ENCODE measurements at regions of chr6 and their contacts with region 1.

Region 1: DNA sequence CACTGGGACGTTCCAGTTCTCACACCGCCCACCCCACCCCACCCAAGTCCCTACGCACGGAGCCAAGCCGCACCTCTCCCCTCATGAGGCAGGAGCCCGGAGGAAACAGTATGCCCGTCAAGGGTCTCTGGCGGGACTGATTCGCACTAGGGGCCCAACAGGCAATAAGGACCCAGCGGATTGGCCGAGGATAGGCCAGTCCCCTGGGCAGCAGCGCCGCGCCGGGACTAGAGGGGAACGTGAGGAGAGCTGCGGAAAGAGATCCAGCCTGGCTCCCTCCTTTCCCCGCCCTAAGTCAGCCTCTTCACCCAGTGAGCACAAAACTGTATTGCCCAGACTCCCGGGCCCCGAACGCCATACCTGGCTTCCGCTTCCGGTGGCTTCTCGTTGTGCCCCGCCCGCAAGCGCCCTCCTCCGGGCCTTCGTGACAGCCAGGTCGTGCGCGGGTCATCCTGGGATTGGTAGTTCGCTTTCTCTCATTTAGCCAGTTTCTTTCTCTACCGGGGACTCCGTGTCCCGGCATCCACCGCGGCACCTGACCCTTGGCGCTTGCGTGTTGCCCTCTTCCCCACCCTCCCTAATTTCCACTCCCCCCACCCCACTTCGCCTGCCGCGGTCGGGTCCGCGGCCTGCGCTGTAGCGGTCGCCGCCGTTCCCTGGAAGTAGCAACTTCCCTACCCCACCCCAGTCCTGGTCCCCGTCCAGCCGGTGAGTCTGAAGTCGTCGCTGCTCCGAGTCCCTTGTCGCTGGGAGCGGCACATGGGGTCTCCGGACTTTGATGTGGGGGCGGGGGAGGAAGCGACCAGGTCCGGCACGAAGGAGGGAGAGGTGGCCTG is at the start of gene CSNK2B:
- DNase-seq: peak; percentile 95 to 99
- ATAC-seq: peak; percentile 88 to 97 (median 91)
- H3K4me3 ChIP-seq: peak within 1 kb of the TSS; percentile 67
- H3K4me3 Mint-ChIP-seq: peak within 1 kb of the TSS; percentile 96
- H3K27ac ChIP-seq: peak within 1 kb of the TSS; percentile 92
- H3K27ac Mint-ChIP-seq: peak within 1 kb of the TSS; percentile 97 to 100
- H3K4me1 ChIP-seq: peaks cover 43% of the 10 kb centered on the region
- H3K4me1 Mint-ChIP-seq: peaks cover 32 to 53% of the 10 kb centered on the region in 2 donors
- H3K27me3 ChIP-seq: no peaks in the 10 kb centered on the region
- H3K27me3 Mint-ChIP-seq: no peaks in the 10 kb centered on the region
- CTCF ChIP-seq: no peak
- total RNA-seq, gene CSNK2B: 140 to 157 (median 141) TPM

Region 2: GRCh38 chr6:31541658-31542521 is 123.8 kb before region 1 on chr6 and contains the start of gene DDX39B:
- intact Hi-C with region 1: loop called (anchors 5 kb)
- DNase-seq: peak; percentile 85 to 99
- ATAC-seq: peak; percentile 69 to 86 (median 77)
- H3K4me3 ChIP-seq: peak within 1 kb of the TSS; percentile 77
- H3K4me3 Mint-ChIP-seq: peak within 1 kb of the TSS; percentile 99
- H3K27ac ChIP-seq: peak within 1 kb of the TSS; percentile 92
- H3K27ac Mint-ChIP-seq: peak within 1 kb of the TSS; percentile 94 to 96
- H3K4me1 ChIP-seq: peaks cover 36% of the 10 kb centered on the region
- H3K4me1 Mint-ChIP-seq: peaks cover 49 to 56% of the 10 kb centered on the region in 2 donors
- H3K27me3 ChIP-seq: no peaks in the 10 kb centered on the region
- H3K27me3 Mint-ChIP-seq: no peaks in the 10 kb centered on the region
- CTCF ChIP-seq: no peak
- total RNA-seq, gene DDX39B: 506 to 571 (median 534) TPM

Region 3: GRCh38 chr6:31619805-31620585 is 45.7 kb before region 1 on chr6:
- intact Hi-C with region 1: loop called (anchors 1 kb)
- DNase-seq: peak; percentile 93 to 99
- ATAC-seq: peak; percentile 80 to 94 (median 84)
- H3K4me3 ChIP-seq: peak overlapping the region; percentile 91
- H3K4me3 Mint-ChIP-seq: peak overlapping the region; percentile 92
- H3K27ac ChIP-seq: peak overlapping the region; percentile 98
- H3K27ac Mint-ChIP-seq: peak overlapping the region; percentile 92 to 95
- H3K4me1 ChIP-seq: peaks cover 29% of the 10 kb centered on the region
- H3K4me1 Mint-ChIP-seq: peaks cover 20 to 25% of the 10 kb centered on the region in 2 donors
- H3K27me3 ChIP-seq: no peaks in the 10 kb centered on the region
- H3K27me3 Mint-ChIP-seq: no peaks in the 10 kb centered on the region
- CTCF ChIP-seq: no peak

Region 4: DNA sequence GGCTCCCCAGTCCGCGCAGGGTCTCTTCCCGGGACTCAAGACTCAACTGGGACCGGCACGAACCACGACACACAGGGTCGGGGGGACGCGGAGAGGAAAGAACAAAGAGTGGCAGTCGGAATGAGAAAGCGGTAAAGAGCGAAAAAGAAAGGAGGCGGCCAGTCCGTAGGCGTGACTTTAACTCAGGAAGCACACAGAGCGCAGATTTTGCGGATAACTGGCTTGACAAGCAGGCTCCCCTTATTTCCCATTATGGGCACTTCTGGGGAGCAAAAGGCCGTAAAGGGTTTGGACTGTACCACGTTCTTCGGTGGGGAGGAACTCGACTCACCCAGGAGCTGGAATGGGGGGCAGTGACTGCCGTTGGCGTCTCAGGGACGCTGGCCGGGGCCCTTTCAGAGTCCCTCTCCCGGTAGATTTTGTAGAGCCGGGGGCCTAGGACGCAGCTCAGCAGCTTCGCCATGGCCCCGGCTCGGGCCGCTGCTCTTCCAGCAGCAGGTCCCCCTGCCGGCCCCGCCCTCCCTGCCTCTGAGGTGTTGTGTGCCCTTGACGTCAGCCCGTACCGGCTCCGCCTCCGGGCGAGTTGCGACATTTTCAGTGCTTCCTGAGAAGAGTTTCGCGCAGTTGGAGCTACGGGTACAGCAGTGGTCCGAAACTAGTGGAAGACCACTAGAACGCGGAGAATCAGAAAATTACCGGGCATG is 37.3 kb after region 1 on chr6 and contains the start of gene ABHD16A:
- intact Hi-C with region 1: loop called (anchors 2 kb)
- DNase-seq: peak; percentile 97 to 99
- ATAC-seq: peak; percentile 93 to 97 (median 95)
- H3K4me3 ChIP-seq: peak within 1 kb of the TSS; percentile 80
- H3K4me3 Mint-ChIP-seq: peak within 1 kb of the TSS; percentile 99
- H3K27ac ChIP-seq: peak within 1 kb of the TSS; percentile 98
- H3K27ac Mint-ChIP-seq: peak within 1 kb of the TSS; percentile 96 to 98
- H3K4me1 ChIP-seq: peaks cover 28% of the 10 kb centered on the region
- H3K4me1 Mint-ChIP-seq: peaks cover 24 to 27% of the 10 kb centered on the region in 2 donors
- H3K27me3 ChIP-seq: no peaks in the 10 kb centered on the region
- H3K27me3 Mint-ChIP-seq: no peaks in the 10 kb centered on the region
- CTCF ChIP-seq: no peak
- total RNA-seq, gene ABHD16A: 92.0 to 97.6 (median 94.2) TPM

Region 5: DNA sequence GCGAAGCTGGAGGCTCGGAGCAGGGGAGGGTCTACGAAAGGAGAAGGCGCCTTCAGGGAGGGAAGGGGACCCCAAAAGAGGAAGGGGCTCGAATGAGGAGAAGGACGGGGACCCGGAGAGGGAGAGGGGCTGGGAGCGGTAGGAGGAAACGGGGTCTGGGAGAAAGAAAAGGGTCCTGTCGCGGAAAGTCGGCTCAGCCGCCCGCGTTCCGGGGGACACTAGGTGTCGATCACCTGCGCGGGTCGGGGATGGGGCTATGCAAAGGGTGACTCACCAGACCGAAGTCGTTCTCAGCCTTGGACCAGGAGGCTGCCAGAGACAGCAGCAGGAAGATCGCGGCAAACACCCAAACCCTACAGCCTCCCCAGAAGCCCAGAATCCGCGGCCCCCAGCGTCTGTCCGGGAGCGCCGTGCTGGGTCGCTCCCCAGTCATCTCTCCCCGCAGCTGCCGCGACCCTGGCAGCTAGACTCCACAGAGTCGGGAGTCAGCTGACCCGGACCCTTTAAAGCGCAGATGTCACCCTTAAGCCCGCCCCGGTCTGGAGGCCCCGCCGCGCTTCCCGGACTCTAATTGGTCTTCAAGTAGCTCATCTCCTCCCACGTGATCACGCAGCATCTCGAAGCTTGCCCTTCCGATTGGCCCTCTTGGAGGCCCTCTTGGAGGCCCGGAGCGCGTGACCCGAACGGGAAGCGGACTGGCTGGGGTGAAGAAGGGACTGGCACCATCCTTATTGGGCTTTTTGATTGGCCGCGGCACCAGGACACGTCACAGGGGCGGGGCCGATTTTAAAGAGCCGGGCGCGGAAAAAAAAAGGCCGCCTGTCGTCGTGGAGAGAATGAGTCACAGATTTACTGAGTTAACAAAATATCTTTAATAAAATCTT is 196.9 kb after region 1 on chr6 and contains the start of gene NEU1:
- intact Hi-C with region 1: loop called (anchors 1 kb)
- DNase-seq: peak; percentile 99 to 100
- ATAC-seq: peak; percentile 86 to 98 (median 93)
- H3K4me3 ChIP-seq: peak within 1 kb of the TSS; percentile 89
- H3K4me3 Mint-ChIP-seq: peak within 1 kb of the TSS; percentile 96
- H3K27ac ChIP-seq: peak within 1 kb of the TSS; percentile 91
- H3K27ac Mint-ChIP-seq: peak within 1 kb of the TSS; percentile 97 to 99
- H3K4me1 ChIP-seq: peaks cover 25% of the 10 kb centered on the region
- H3K4me1 Mint-ChIP-seq: peaks cover 20 to 33% of the 10 kb centered on the region in 2 donors
- H3K27me3 ChIP-seq: no peaks in the 10 kb centered on the region
- H3K27me3 Mint-ChIP-seq: no peaks in the 10 kb centered on the region
- CTCF ChIP-seq: no peak
- total RNA-seq, gene NEU1: 36.1 to 69.6 (median 51.5) TPM